ENCODE measurements at regions of chr20 and their contacts with region 1.

Region 1: DNA sequence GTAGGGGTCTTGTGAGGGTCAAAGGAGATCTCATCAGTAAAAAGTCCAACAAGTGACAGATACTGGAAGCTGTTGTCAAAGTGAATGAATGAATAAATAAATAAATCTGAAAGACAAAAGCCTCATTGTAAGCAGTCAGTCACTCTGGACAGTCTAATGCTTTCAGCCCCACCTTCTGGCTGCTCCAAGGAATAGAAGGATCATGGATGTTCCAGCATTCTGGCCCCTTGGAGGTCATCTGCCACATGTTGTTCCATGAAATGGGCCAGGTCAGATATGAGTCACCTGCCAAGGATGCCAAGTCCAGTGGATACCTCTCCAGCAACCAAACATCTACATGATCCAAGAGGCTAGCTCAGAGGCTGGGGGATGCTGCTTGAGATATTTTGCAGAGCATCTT is 185.7 kb downstream of the BMP7 start:
- DNase-seq: no peak
- H3K4me3 ChIP-seq: no peak overlapping the region
- H3K27ac ChIP-seq: peak overlapping the region in 2 of 59 donors; percentile 1 to 60
- H3K27me3 ChIP-seq: peaks cover 0 to 13% (median 0%) of the 10 kb centered on the region in 45 donors
- CTCF ChIP-seq: peak in 52 of 56 donors; percentile 13 to 79 (median 51)

Region 2: GRCh38 chr20:56540420-56540819 is 540.4 kb before region 1 on chr20:
- intact Hi-C with region 1: loop called in 1 of 2 experiments (anchors 5 kb)
- DNase-seq: no peak
- H3K4me3 ChIP-seq: no peak overlapping the region
- H3K27ac ChIP-seq: no peak overlapping the region
- H3K27me3 ChIP-seq: no peaks in the 10 kb centered on the region
- CTCF ChIP-seq: no peak

Region 3: GRCh38 chr20:56554869-56555268 is 525.9 kb before region 1 on chr20:
- intact Hi-C with region 1: loop called in 1 of 2 experiments (anchors 10 kb)
- DNase-seq: peak in 5 of 10 donors; percentile 14 to 54 (median 33)
- H3K4me3 ChIP-seq: no peak overlapping the region
- H3K27ac ChIP-seq: peak overlapping the region in 1 of 59 donors; percentile 26
- H3K27me3 ChIP-seq: peaks cover 0 to 14% (median 0%) of the 10 kb centered on the region in 45 donors
- CTCF ChIP-seq: peak in 2 of 56 donors; percentile 11 to 17

Region 4: GRCh38 chr20:57013718-57014117 is 67.1 kb before region 1 on chr20:
- intact Hi-C with region 1: loop called in 1 of 2 experiments (anchors 2 kb)
- DNase-seq: no peak
- H3K4me3 ChIP-seq: no peak overlapping the region
- H3K27ac ChIP-seq: no peak overlapping the region
- H3K27me3 ChIP-seq: peaks cover 0 to 59% (median 24%) of the 10 kb centered on the region in 45 donors
- CTCF ChIP-seq: no peak

Region 5: DNA sequence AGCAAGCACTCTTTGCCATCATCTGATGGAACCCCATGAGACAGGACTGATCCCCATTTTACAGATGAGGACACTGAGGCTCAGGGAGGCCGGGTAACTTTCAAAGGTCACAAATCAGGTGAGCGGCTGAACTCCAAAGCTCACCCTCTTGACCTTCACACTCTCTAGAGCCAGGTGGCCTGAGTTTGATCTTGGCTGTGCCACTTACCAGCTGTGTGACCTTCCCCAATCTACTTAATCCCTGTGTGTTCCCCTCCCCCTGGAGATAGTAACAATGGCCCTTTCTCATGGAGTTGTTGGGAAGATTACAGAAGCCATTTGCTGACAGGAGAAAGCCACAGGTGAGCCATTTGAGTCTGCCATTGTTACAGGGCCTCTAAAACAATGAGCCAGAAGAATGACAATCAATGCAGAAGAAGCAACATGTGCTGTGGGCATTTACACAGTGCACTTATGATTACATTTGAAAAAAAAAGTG is 151.2 kb after region 1 on chr20:
- intact Hi-C with region 1: no loop called
- DNase-seq: no peak
- H3K4me3 ChIP-seq: no peak overlapping the region
- H3K27ac ChIP-seq: no peak overlapping the region
- H3K27me3 ChIP-seq: peaks cover 0 to 12% (median 0%) of the 10 kb centered on the region in 45 donors
- CTCF ChIP-seq: no peak